ENCODE measurements at regions of chr1 and their contacts with region 1.

Region 1: GRCh38 chr1:156838981-156839410 is 19.9 kb downstream of the INSRR start:
- DNase-seq: no peak
- H3K4me3 ChIP-seq: no peak overlapping the region
- H3K27me3 ChIP-seq: peaks cover 30% of the 10 kb centered on the region
- CTCF ChIP-seq: peak; percentile 92

Region 2: GRCh38 chr1:156804572-156805243 is 34.3 kb before region 1 on chr1:
- CTCF ChIA-PET with region 1: interaction called, 71 read pairs
- POLR2A ChIA-PET with region 1: no interaction called
- DNase-seq: no peak
- H3K4me3 ChIP-seq: no peak overlapping the region
- H3K27me3 ChIP-seq: no peaks in the 10 kb centered on the region
- CTCF ChIP-seq: no peak

Region 3: GRCh38 chr1:156852418-156852874 is 13.4 kb after region 1 on chr1:
- CTCF ChIA-PET with region 1: interaction called, 174 read pairs
- POLR2A ChIA-PET with region 1: no interaction called
- DNase-seq: no peak
- H3K4me3 ChIP-seq: no peak overlapping the region
- H3K27me3 ChIP-seq: peaks cover 45% of the 10 kb centered on the region
- CTCF ChIP-seq: no peak

Region 4: DNA sequence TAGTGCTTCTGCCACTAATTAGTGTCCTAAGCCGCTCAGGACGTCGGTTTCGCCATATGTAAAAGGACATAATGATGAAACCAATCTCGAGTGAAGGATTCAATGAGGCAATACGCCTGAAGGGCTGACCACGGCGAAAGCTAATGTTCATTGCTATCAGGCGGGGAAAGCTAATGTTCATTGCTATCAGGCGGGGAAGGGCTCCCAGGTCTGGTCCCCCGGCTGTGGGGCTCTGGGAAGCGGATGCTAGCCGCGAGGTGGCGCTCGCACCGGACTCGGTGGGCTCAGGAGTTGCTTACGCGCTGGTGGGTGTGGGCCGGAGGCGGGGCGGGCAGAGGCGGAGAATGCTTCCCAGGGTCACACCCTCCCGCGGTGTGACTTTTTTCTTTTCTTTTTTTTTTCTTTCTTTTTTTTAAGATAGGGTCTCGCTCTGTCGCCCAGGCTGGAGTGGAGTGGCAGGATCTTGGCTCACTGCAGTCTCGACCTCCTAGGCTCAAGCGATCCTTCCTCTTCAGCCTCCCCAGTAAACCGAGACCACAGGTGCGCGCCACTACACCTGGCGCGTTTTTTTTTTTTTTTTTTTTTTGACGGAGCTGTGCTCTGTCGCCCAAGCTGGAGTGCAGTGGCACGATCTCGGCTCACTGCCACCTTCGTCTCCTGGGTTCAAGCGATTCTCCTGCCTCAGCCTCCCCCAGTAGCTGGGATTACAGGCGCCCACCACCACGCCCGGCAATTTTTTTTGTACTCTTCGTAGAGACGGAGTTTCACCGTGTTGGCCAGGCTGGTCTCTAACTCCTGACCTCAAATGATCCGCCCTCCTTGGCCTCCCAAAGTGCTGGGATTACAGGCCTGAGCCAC is 53.4 kb after region 1 on chr1:
- CTCF ChIA-PET with region 1: interaction called, 39 read pairs
- POLR2A ChIA-PET with region 1: no interaction called
- DNase-seq: no peak
- H3K4me3 ChIP-seq: peak overlapping the region; percentile 16
- H3K27me3 ChIP-seq: peaks cover 2% of the 10 kb centered on the region; the same call in 1 of the 2 replicates
- CTCF ChIP-seq: peak; percentile 91

Measured in BJ (cell line).